ENCODE measurements at regions of chr3 and their contacts with region 1.

Region 1: DNA sequence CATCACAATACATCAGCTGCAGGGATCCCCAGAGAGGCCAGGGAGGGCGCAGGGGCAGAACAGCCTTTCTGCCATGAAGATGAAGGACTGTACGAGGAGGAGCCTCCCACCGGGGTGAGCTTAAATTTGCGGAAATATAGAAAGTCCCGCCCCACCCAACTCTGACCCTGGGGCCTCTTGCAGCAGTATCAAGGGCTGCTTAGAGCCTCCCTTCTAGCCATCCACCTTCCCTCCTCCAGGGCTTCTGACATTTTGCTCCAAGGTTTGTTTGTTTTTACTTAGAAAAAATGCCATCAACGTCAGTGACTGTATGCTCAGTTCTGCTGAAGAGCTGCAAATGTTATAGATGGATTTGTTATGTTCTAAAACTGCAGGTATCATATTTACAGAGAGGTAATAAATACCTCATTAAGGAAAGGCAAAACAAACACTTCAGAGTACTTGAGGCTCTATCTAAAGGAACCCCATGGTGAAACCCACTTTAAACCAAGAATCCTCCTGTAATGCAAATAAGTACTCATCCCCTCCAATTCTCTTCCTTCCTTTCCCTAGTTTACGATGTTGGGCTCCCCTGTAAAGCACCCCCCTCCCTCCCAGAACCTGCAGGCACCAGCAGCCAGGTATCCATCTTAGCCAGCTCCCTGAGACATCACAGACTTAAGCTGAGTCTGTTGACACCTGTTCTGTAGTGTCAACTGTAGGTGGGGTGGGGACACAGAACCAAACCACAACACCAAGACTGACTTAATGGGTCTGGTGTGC is 30.5 kb downstream of the RFTN1 start:
- DNase-seq: peak; percentile 59
- H3K4me3 Mint-ChIP-seq: peak overlapping the region; percentile 15
- H3K27ac Mint-ChIP-seq: peak overlapping the region; percentile 89
- H3K4me1 Mint-ChIP-seq: peaks cover 77% of the 10 kb centered on the region
- H3K27me3 Mint-ChIP-seq: no peaks in the 10 kb centered on the region

Region 2: DNA sequence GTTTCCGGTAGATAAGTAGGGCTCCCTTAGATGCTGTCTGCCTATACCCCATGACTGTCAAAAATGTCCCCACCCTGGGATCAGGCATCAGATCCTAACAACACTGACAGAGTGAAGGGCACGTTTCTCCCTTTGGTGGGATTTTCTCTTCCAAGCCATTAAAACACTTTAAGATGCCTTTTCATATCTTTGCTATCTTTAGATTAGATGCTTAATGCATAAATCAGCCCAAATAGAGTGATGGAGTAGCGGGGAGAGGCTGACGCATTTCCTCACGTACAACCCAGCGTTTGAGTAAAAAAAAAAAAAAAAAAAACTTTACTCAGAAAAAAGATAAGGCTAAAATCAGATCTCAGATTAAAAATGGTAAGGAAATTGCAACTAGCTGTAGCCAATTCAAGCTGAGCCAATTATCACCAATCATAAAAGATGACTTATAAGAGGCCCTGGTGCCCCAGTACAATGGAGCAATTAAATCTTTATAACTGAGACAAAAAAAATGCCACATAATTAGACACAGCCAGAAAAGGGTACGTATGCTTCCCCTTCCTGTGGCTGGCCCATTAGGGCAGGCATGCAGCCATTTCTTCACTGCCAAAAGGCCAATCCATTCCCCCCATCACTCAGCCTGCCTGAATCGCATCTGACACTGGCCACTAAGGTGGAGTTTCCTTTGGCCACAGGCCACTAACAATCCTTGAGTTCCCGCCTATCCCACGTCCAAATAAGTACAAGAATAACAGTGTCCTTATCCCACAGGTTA is 14.4 kb before region 1 on chr3:
- CTCF ChIA-PET with region 1: interaction called, 13 read pairs
- POLR2A ChIA-PET with region 1: no interaction called
- DNase-seq: no peak
- H3K4me3 Mint-ChIP-seq: peak overlapping the region; percentile 12
- H3K27ac Mint-ChIP-seq: peak overlapping the region; percentile 71
- H3K4me1 Mint-ChIP-seq: peaks cover 52% of the 10 kb centered on the region
- H3K27me3 Mint-ChIP-seq: no peaks in the 10 kb centered on the region

Region 3: DNA sequence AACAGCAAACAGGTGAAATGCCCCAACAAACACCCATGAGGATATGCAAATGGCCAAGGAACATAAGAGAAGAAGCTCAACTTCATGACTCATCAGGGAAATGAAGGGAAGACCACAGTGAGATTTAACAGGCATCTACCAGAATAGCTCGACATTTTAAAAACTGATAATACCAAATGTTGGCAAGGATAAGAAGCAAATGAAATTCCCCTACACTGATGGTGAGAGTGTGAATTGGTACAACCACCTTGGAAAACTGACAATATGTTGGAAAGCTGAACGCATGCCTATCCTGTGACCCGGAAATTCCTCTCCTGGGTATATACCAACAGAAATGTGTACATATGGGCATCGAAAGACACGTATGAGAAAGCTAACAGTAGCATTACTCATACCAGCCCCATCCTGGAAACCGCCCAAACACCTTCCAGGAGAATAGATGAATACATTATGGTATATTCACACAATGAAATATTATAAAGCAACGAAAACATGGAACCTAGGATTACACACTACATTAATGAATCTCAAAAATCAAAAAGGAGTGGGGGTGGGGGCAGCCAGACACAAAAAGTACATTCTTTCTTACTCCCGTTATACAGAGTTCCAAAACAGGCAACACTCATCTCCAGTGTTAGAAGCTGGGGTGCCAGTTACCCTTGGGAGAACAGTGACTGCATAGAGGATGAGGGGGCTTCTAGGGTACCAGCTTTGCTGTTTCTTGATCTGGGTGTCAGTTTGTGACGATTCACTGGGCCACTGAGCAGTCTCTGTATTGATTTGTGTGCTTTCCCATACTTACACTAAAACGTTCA is 13.7 kb after region 1 on chr3:
- CTCF ChIA-PET with region 1: interaction called, 12 read pairs
- POLR2A ChIA-PET with region 1: interaction called, 5 read pairs
- DNase-seq: no peak
- H3K4me3 Mint-ChIP-seq: peak overlapping the region; percentile 41
- H3K27ac Mint-ChIP-seq: peak overlapping the region; percentile 70
- H3K4me1 Mint-ChIP-seq: peaks cover 51% of the 10 kb centered on the region
- H3K27me3 Mint-ChIP-seq: no peaks in the 10 kb centered on the region

Measured in activated CD4-positive, alpha-beta T cell treated with anti-CD3 and anti-CD28 coated beads, Interleukin-2, amount 10 ng/mL, durations not matched to agents 7 days and 5 days (primary cell).